ENCODE measurements at regions of chr1 and their contacts with region 1.

Region 1: GRCh38 chr1:2381741-2382620 is 9.4 kb downstream of the MORN1 start:
- DNase-seq: peak; percentile 56
- H3K4me3 ChIP-seq: no peak overlapping the region
- H3K27ac ChIP-seq: no peak overlapping the region
- H3K27me3 ChIP-seq: no peaks in the 10 kb centered on the region
- CTCF ChIP-seq: peak; percentile 95

Region 2: GRCh38 chr1:2194898-2195673 is 186.9 kb before region 1 on chr1:
- CTCF ChIA-PET with region 1: interaction called, 255 read pairs
- POLR2A ChIA-PET with region 1: interaction called, 24 read pairs
- DNase-seq: peak; percentile 48
- H3K4me3 ChIP-seq: peak overlapping the region; percentile 70
- H3K27ac ChIP-seq: peak overlapping the region; percentile 89
- H3K27me3 ChIP-seq: no peaks in the 10 kb centered on the region
- CTCF ChIP-seq: peak; percentile 85

Region 3: GRCh38 chr1:2205191-2205952 is 176.6 kb before region 1 on chr1:
- CTCF ChIA-PET with region 1: interaction called, 50 read pairs
- POLR2A ChIA-PET with region 1: no interaction called
- DNase-seq: peak; percentile 81
- H3K4me3 ChIP-seq: peak overlapping the region; percentile 50
- H3K27ac ChIP-seq: no peak overlapping the region
- H3K27me3 ChIP-seq: no peaks in the 10 kb centered on the region
- CTCF ChIP-seq: no peak

Region 4: GRCh38 chr1:2233997-2234761 is 147.8 kb before region 1 on chr1:
- CTCF ChIA-PET with region 1: interaction called, 13 read pairs
- POLR2A ChIA-PET with region 1: interaction called, 4 read pairs
- DNase-seq: peak; percentile 61
- H3K4me3 ChIP-seq: peak overlapping the region; percentile 87
- H3K27ac ChIP-seq: no peak overlapping the region
- H3K27me3 ChIP-seq: no peaks in the 10 kb centered on the region
- CTCF ChIP-seq: no peak

Region 5: DNA sequence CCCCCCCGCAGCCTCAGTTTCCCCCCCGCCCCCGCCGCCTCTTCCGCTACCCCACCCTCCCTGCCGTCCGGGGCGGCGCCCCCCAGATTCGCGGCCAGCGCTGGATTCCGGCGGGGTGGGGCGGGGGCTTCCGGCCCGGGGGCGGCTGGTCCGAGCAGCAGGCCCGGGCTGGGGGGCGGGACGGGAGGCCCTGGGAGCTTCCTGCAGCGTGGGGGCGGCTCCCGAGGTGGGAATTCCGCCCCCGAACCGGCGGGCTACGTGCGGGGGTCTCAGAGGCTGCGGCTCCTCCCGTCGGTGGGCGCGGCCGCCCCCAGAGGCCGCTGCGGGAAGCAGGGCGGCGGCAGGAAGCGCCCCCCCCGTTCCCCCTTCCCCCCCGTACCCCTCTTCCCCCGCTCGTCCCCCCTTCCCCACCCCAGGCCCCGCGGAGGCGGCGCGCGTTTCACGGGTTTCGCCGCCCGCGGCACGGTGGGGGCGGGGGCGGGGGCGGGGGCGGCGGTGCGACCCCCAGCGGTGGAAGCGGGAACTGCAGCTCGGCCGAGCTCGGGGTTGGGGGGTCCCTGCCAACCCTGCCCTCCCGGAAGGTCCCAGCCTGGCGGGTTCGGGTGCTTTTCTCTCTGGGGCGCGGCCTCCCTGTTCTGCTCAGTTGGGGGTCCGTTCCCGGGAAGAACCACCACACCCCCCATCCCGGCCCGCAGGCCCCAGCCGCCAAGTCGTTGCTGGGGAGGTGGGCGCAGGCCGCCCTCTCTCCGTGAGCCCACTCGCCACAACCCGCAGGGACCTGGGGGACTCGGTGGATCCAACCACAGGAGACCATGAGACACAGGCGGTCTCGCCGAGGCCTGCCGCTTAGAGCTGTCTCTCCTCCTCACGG is 66.9 kb before region 1 on chr1:
- CTCF ChIA-PET with region 1: interaction called, 12 read pairs
- POLR2A ChIA-PET with region 1: interaction called, 3 read pairs
- DNase-seq: no peak
- H3K4me3 ChIP-seq: peak overlapping the region; percentile 52
- H3K27ac ChIP-seq: peak overlapping the region; percentile 47
- H3K27me3 ChIP-seq: no peaks in the 10 kb centered on the region
- CTCF ChIP-seq: peak; percentile 55

Region 6: GRCh38 chr1:2350911-2351655 is 30.9 kb before region 1 on chr1:
- CTCF ChIA-PET with region 1: interaction called, 10 read pairs
- POLR2A ChIA-PET with region 1: no interaction called
- DNase-seq: no peak
- H3K4me3 ChIP-seq: no peak overlapping the region
- H3K27ac ChIP-seq: no peak overlapping the region
- H3K27me3 ChIP-seq: peaks cover 2% of the 10 kb centered on the region
- CTCF ChIP-seq: no peak

Region 7: DNA sequence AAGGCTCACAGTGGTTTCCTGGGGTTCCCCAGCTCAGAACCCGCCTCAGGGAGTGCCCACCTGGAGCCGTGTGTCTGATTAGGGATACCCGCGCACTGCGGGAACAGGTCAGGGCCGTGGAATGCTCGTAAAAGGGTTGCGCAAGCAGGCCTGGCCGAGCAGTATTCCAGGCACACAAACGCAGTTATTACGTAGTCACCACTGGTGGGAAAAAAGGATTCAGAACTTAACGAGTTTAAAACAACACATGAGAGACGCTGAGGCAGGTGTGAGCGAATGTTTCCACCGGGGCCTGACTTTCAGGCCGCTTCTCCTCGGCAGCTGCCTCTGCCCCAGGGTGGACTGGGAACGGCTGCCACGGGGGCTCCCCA is 112.3 kb after region 1 on chr1:
- CTCF ChIA-PET with region 1: no interaction called
- POLR2A ChIA-PET with region 1: no interaction called
- DNase-seq: no peak
- H3K4me3 ChIP-seq: no peak overlapping the region
- H3K27ac ChIP-seq: no peak overlapping the region
- H3K27me3 ChIP-seq: peaks cover 17% of the 10 kb centered on the region
- CTCF ChIP-seq: no peak

Region 8: GRCh38 chr1:2504225-2504948 is 122.4 kb after region 1 on chr1:
- CTCF ChIA-PET with region 1: no interaction called
- POLR2A ChIA-PET with region 1: no interaction called
- DNase-seq: no peak
- H3K4me3 ChIP-seq: no peak overlapping the region
- H3K27ac ChIP-seq: no peak overlapping the region
- H3K27me3 ChIP-seq: peaks cover 18% of the 10 kb centered on the region
- CTCF ChIP-seq: no peak

Measured in AG04450 (cell line).